ENCODE measurements at regions of chr12 and their contacts with region 1.

Region 1: GRCh38 chr12:109140560-109140959 is 24.2 kb downstream of the ACACB start:
- DNase-seq: no peak
- ATAC-seq: no peak
- H3K4me3 Mint-ChIP-seq: no peak overlapping the region
- H3K27ac Mint-ChIP-seq: no peak overlapping the region
- H3K4me1 Mint-ChIP-seq: no peaks in the 10 kb centered on the region
- H3K27me3 Mint-ChIP-seq: no peaks in the 10 kb centered on the region; the same call in 1 of the 2 replicates
- CTCF ChIP-seq: no peak

Region 2: GRCh38 chr12:107955966-107956643 is 1184.5 kb before region 1 on chr12:
- CTCF ChIA-PET with region 1: no interaction called
- POLR2A ChIA-PET with region 1: interaction called, 10 read pairs
- DNase-seq: no peak
- ATAC-seq: no peak
- H3K4me3 Mint-ChIP-seq: no peak overlapping the region
- H3K27ac Mint-ChIP-seq: no peak overlapping the region
- H3K4me1 Mint-ChIP-seq: no peaks in the 10 kb centered on the region
- H3K27me3 Mint-ChIP-seq: peaks cover 16% of the 10 kb centered on the region
- CTCF ChIP-seq: no peak

Region 3: DNA sequence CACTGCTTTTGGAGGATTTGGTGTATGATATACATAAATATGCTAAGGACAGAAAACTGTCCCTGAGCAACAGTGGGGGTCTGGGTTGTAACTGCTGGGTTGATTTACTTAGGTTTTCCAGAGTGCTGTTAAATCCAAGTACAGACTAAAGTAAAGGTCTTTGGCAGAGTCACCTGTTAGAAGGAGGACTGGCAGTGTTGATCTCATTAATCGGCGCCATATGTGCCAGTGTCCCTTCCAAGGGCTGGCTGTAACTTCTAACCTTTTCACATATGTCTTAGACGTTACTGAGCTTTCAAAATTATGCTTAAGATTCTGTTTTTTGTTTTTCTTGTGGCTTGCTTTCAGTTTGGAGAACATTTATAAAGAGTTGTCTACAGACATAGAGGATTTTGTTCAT is 38.1 kb before region 1 on chr12:
- CTCF ChIA-PET with region 1: no interaction called
- POLR2A ChIA-PET with region 1: no interaction called
- DNase-seq: no peak
- ATAC-seq: no peak
- H3K4me3 Mint-ChIP-seq: no peak overlapping the region
- H3K27ac Mint-ChIP-seq: no peak overlapping the region
- H3K4me1 Mint-ChIP-seq: peaks cover 9% of the 10 kb centered on the region
- H3K27me3 Mint-ChIP-seq: no peaks in the 10 kb centered on the region
- CTCF ChIP-seq: no peak